AG04450 (cell line): ENCODE measurements at regions of chr2 and their contacts with region 1.

Region 1: GRCh38 chr2:237280229-237280628 is 133.7 kb downstream of the COL6A3 start:
- DNase-seq: peak; percentile 97
- H3K4me3 ChIP-seq: no peak overlapping the region
- H3K27ac ChIP-seq: peak overlapping the region; percentile 99
- H3K27me3 ChIP-seq: no peaks in the 10 kb centered on the region
- CTCF ChIP-seq: 0 out of 2 replicates have a peak, but pooled peaks have one; percentile 11

Region 2: GRCh38 chr2:237291138-237291792 is 11.0 kb after region 1 on chr2:
- CTCF ChIA-PET with region 1: interaction called, 3 read pairs
- POLR2A ChIA-PET with region 1: interaction called, 26 read pairs
- DNase-seq: peak; percentile 97
- H3K4me3 ChIP-seq: peak overlapping the region; percentile 14
- H3K27ac ChIP-seq: peak overlapping the region; percentile 94
- H3K27me3 ChIP-seq: no peaks in the 10 kb centered on the region
- CTCF ChIP-seq: no peak